ENCODE measurements at regions of chr1 and their contacts with region 1.

Region 1: GRCh38 chr1:215517441-215517891 is 49.6 kb upstream of the KCTD3 start:
- DNase-seq: peak; percentile 22 to 36
- H3K4me3 ChIP-seq: no peak overlapping the region
- H3K27ac ChIP-seq: no peak overlapping the region
- H3K4me1 ChIP-seq: peaks cover 7% of the 10 kb centered on the region; the same call in 1 of the 2 replicates
- H3K27me3 ChIP-seq: no peaks in the 10 kb centered on the region
- CTCF ChIP-seq: peak; percentile 47; the same call in 1 of the 2 replicates

Region 2: DNA sequence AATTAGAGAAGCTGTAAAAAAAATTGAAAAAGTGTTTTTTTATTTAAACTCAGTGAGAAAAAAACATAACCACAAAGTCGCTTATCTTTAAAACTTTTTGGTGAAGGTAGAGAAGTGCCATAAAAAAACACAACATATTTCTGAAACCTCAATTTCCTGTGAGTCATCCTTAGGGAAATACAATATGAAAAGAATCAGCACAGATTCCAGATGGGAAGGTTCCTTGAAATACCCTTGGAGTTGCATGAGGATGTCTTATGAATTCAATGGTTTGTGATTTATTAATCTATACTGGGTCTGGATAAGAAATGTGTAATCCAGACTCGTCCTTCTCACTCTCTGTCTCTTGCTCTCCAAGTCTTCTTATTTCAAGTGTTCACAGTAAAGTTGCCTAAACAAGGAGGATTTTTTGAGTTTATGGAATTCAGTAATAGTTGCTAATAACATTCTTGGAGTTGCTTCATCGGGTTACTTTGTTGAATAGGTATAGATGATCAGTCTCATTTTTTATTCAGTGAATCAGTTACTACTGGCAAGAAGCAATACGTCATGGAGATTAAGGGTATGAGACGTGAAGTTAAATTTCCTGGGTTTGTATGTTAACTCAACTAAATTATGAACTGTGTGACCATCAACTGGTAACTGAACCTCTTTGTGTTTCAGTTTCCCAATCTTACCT is 243.5 kb before region 1 on chr1:
- CTCF ChIA-PET with region 1: no interaction called
- POLR2A ChIA-PET with region 1: no interaction called
- intact Hi-C with region 1: loop called (anchors 5 kb)
- DNase-seq: peak in 1 of 2 experiments; percentile 48
- H3K4me3 ChIP-seq: no peak overlapping the region
- H3K27ac ChIP-seq: no peak overlapping the region
- H3K4me1 ChIP-seq: peaks cover 12% of the 10 kb centered on the region
- H3K27me3 ChIP-seq: no peaks in the 10 kb centered on the region
- CTCF ChIP-seq: no peak

Measured in PC-9 (cell line).